Activated CD4-positive, alpha-beta memory T cell treated with anti-CD3 and anti-CD28 coated beads, Interleukin-2, amount 10 ng/mL, durations not matched to agents 7 days and 5 days (primary cell): ENCODE measurements at regions of chr14 and their contacts with region 1.

Region 1: DNA sequence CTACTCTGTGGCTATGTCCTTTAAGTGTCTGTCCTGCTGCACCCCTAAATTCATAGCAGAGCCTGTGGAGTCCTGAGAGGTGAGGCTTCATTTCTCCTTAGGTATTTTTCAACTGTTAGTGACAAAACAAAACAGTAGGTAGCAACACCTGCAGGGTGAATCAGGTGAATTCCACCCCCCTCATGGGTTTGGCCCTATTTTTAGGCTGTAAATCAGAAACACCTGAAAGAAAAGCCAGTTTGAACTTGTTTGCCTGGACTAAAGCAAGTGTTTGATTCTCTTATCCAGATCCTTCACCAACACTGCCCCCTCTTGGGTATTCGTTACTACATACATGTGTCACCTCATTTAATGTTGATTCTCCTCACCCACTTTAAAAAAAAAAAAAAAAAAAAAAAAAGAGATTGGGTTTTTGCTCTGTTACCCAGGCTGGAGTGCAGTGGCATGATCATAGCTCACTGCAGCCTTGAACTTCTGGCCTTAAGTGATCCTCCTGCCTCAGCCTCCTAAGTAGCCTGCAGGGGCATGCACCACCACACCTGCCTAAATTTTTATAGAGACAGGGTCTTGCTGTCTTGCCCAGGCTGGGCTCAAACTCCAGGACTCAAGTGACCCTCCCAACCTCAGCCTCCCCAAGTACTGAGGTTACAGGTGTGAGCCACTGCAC is 10.3 kb downstream of the TBPL2 start:
- DNase-seq: peak; percentile 41
- H3K4me3 Mint-ChIP-seq: no peak overlapping the region
- H3K27ac Mint-ChIP-seq: no peak overlapping the region
- H3K4me1 Mint-ChIP-seq: peaks cover 23% of the 10 kb centered on the region
- H3K27me3 Mint-ChIP-seq: no peaks in the 10 kb centered on the region

Region 2: DNA sequence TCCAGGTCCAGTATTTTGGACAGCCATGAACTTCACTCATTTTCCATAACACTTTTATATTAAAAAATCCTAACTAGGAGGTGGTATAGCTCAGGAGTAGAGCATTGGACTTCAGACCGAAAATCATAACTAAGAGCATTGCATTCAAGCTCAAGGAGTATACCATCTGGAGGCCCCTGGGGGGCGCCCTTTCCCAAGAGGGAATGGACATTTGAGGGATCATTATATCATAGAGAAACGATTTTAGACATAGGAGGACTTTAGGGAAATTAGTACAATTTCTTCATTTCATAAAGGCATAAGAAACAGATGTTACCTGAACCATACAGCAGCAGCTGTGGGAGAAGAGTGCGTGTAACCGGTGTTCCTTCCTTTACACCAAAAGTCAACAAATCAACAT is 13.3 kb before region 1 on chr14:
- CTCF ChIA-PET with region 1: interaction called, 13 read pairs
- POLR2A ChIA-PET with region 1: interaction called, 3 read pairs
- DNase-seq: peak; percentile 21
- H3K4me3 Mint-ChIP-seq: no peak overlapping the region
- H3K27ac Mint-ChIP-seq: no peak overlapping the region
- H3K4me1 Mint-ChIP-seq: peaks cover 9% of the 10 kb centered on the region
- H3K27me3 Mint-ChIP-seq: peaks cover 2% of the 10 kb centered on the region

Region 3: DNA sequence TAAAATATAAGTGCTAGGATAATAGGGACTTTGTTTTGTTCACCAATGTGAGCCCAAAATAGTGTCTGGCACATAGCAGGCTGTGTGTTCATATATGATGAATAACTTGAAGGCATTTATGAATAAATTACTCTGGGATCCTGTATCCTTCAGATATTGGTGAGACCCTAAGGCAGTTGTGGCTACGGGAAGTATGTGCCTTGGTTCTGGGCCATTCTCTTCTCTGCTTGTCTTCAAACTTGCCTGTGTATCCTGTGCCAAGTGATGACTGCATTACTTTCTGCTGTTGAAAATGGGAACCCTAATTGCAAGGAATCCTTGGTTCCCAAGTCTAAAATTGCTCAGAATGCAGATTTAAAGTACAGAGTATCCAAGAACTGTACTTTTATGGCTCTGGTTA is 82.3 kb after region 1 on chr14:
- CTCF ChIA-PET with region 1: no interaction called
- POLR2A ChIA-PET with region 1: no interaction called
- DNase-seq: no peak
- H3K4me3 Mint-ChIP-seq: no peak overlapping the region
- H3K27ac Mint-ChIP-seq: no peak overlapping the region
- H3K4me1 Mint-ChIP-seq: no peaks in the 10 kb centered on the region
- H3K27me3 Mint-ChIP-seq: no peaks in the 10 kb centered on the region

Region 4: GRCh38 chr14:56065621-56066290 is 635.6 kb after region 1 on chr14:
- CTCF ChIA-PET with region 1: no interaction called
- POLR2A ChIA-PET with region 1: no interaction called
- DNase-seq: no peak
- H3K4me3 Mint-ChIP-seq: no peak overlapping the region
- H3K27ac Mint-ChIP-seq: no peak overlapping the region
- H3K4me1 Mint-ChIP-seq: no peaks in the 10 kb centered on the region
- H3K27me3 Mint-ChIP-seq: peaks cover 4% of the 10 kb centered on the region